A549 (cell line): ENCODE measurements at regions of chr1 and their contacts with region 1.

Region 1: GRCh38 chr1:233440951-233441401 is 113.5 kb downstream of the MAP3K21 start:
- DNase-seq: peak; percentile 33 to 80
- ATAC-seq: peak; percentile 82 to 86
- H3K4me3 ChIP-seq: no peak overlapping the region
- H3K27ac ChIP-seq: peak overlapping the region; percentile 26 to 42; a peak in 4 of 6 replicates
- H3K4me1 ChIP-seq: peaks cover 23% of the 10 kb centered on the region
- CTCF ChIP-seq: peak; percentile 86
- EP300 ChIP-seq: no peak
- POLR2A ChIP-seq: no peak
- RAD21 ChIP-seq: peak; percentile 92 to 94

Region 2: DNA sequence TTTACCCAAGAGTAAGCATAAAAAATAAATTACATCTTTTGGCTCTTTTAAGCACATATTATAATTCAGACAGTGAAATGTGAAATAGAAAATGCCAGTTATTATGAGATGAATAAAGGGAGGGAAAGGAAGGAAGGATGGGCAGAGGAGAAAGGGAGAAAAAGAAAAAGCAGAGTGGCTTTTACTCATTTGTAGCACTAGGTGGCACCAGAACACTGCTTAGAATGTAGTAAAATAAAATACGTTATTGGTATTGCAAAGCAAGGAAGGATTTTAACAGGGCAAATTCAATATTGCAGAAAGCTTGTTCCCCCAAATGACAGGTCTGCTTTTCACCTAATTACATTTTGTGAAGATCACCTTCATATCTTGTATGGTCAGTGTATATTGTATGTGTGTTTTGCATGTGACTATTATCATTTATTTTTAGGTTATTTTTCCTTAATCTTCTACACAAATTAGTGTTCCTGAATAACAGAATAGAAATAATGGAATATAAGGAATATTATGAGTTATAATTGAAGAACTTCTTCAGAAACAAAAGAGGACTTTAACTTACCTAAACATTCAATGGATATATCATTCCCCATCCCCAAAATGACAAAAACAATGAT is 136.4 kb before region 1 on chr1:
- CTCF ChIA-PET with region 1: interaction called, 14 read pairs
- POLR2A ChIA-PET with region 1: no interaction called
- DNase-seq: peak in 1 of 2 experiments; percentile 38
- ATAC-seq: peak in 1 of 2 experiments; percentile 61; a peak in 2 of 6 replicates
- H3K4me3 ChIP-seq: no peak overlapping the region
- H3K27ac ChIP-seq: no peak overlapping the region
- H3K4me1 ChIP-seq: 0 out of 3 replicates have a peak, but pooled peaks cover 3% of the 10 kb centered on the region
- CTCF ChIP-seq: peak; percentile 95
- EP300 ChIP-seq: no peak
- POLR2A ChIP-seq: no peak
- RAD21 ChIP-seq: peak; percentile 91 to 94

Region 3: GRCh38 chr1:233421293-233421692 is 19.7 kb before region 1 on chr1:
- CTCF ChIA-PET with region 1: interaction called, 66 read pairs
- POLR2A ChIA-PET with region 1: no interaction called
- DNase-seq: no peak
- ATAC-seq: no peak
- H3K4me3 ChIP-seq: no peak overlapping the region
- H3K27ac ChIP-seq: no peak overlapping the region
- H3K4me1 ChIP-seq: no peaks in the 10 kb centered on the region
- CTCF ChIP-seq: no peak
- EP300 ChIP-seq: no peak
- POLR2A ChIP-seq: no peak
- RAD21 ChIP-seq: no peak

Region 4: DNA sequence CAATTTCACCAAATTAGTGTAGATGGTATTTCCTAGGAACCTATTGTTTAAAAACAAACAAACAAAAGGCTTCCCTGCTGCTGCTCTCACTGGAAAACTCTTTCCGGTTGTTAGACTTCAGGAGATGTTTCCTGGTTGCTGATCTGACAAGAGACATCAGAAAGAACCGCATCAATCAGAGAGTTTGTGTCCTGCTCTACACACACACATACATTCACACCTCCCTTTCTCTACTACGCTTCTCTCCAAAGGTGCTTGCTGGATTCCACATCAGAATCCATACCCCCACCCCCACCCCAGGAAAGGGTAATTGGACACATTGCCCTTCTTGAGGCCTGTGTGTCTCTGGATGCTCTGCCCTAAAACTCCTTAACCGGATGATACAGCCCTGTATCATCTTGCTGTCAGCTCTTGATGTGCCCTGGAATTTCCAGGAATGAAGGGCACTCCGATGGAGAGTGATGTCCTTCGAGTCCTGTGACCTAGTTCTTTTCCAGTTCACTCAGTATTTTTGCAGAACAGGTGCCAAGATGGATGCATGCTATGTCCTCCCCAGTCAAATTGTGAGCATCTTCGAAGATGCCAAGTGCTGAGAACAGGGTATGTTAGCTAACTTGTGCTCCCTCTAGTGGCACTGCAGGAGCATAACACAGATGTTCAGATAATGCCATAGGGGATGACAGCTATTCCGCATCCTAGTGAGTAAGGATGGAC is 349.8 kb after region 1 on chr1:
- CTCF ChIA-PET with region 1: interaction called, 54 read pairs
- POLR2A ChIA-PET with region 1: no interaction called
- DNase-seq: peak; percentile 75 to 88
- ATAC-seq: peak; percentile 98 to 99
- H3K4me3 ChIP-seq: no peak overlapping the region
- H3K27ac ChIP-seq: no peak overlapping the region
- H3K4me1 ChIP-seq: no peaks in the 10 kb centered on the region
- CTCF ChIP-seq: peak; percentile 93
- EP300 ChIP-seq: no peak
- POLR2A ChIP-seq: no peak
- RAD21 ChIP-seq: peak; percentile 89 to 94

Region 5: GRCh38 chr1:234065794-234066447 is 624.9 kb after region 1 on chr1:
- CTCF ChIA-PET with region 1: interaction called, 28 read pairs
- POLR2A ChIA-PET with region 1: no interaction called
- DNase-seq: peak; percentile 58 to 76
- ATAC-seq: peak; percentile 84 to 97; a peak in 5 of 6 replicates
- H3K4me3 ChIP-seq: no peak overlapping the region
- H3K27ac ChIP-seq: 0 out of 6 replicates have a peak overlapping the region, but pooled peaks of 1 of the 2 experiments have one; percentile 3
- H3K4me1 ChIP-seq: no peaks in the 10 kb centered on the region
- CTCF ChIP-seq: peak; percentile 76
- EP300 ChIP-seq: no peak
- POLR2A ChIP-seq: no peak
- RAD21 ChIP-seq: peak; percentile 78 to 80